Heart right ventricle (tissue), 16 donors: ENCODE measurements at regions of chr15 and their contacts with region 1.

Region 1: GRCh38 chr15:67188551-67189218 is 65.8 kb downstream of the AAGAB start:
- DNase-seq: peak in 1 of 2 donors; percentile 75
- ATAC-seq: peak in 5 of 8 donors; percentile 15 to 37 (median 24)
- H3K4me3 ChIP-seq: no peak overlapping the region
- H3K27ac ChIP-seq: peak overlapping the region; percentile 79 to 95 (median 88)
- H3K4me1 ChIP-seq: peaks cover 35 to 70% (median 66%) of the 10 kb centered on the region in 9 donors
- H3K27me3 ChIP-seq: no peaks in the 10 kb centered on the region
- CTCF ChIP-seq: no peak

Region 2: GRCh38 chr15:66883322-66883911 is 305.3 kb before region 1 on chr15:
- intact Hi-C with region 1: loop called in 1 of 10 experiments (anchors 5 kb)
- DNase-seq: peak; percentile 86 to 94
- ATAC-seq: peak; percentile 77 to 89 (median 85)
- H3K4me3 ChIP-seq: no peak overlapping the region
- H3K27ac ChIP-seq: peak overlapping the region; percentile 36 to 90 (median 74)
- H3K4me1 ChIP-seq: peaks cover 16 to 68% (median 59%) of the 10 kb centered on the region in 9 donors
- H3K27me3 ChIP-seq: no peaks in the 10 kb centered on the region
- CTCF ChIP-seq: no peak

Region 3: GRCh38 chr15:66946578-66947164 is 242.0 kb before region 1 on chr15:
- intact Hi-C with region 1: loop called in 2 of 10 experiments (anchors 10 kb)
- DNase-seq: peak; percentile 60 to 63
- ATAC-seq: peak; percentile 45 to 79 (median 68)
- H3K4me3 ChIP-seq: peak overlapping the region in 1 of 10 donors; percentile 6
- H3K27ac ChIP-seq: no peak overlapping the region
- H3K4me1 ChIP-seq: peaks cover 0 to 9% (median 0%) of the 10 kb centered on the region in 9 donors
- H3K27me3 ChIP-seq: no peaks in the 10 kb centered on the region
- CTCF ChIP-seq: peak; percentile 84 to 98 (median 92)

Region 4: DNA sequence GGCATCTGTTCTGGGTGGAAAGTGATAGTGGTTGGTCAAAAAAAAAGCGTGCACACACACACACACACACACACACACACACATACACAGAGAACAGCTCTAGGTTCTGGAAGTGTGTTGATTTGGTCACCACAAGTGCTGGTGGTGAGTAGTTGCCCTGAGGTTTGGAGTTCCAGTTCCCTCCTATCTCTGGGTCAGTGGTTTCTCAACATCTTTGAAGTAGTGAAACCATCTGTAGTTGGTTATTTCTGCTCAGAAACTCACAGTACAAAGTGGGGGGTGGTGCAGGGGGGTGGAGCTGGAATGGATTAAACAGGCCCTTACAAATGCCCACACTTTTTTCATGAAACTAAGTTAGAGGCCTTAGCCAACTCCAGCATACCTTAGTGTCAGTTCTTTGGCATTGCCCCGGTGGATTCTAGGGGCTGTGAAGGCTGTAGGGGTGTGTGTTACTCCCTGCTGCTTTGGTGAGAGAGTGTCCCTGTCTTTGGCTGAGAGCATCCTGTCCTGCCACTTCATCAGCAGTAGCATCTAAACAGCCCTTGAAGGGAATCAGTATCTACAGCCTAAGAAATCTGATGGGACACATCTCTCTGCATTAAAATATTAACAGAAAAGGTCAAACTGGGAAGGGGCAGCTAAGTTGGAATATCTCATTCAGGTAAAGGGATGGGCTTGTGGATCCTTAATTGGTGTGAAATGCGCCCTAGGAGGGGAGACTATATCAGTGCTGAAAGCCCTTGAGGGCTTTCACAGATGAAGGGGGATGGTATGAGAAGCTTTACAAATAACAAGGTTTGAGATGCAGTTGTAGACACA is 102.7 kb before region 1 on chr15:
- intact Hi-C with region 1: loop called in 1 of 10 experiments (anchors 1 kb)
- DNase-seq: no peak
- ATAC-seq: peak in 4 of 8 donors; percentile 20 to 32 (median 22)
- H3K4me3 ChIP-seq: no peak overlapping the region
- H3K27ac ChIP-seq: peak overlapping the region in 1 of 10 donors; percentile 23
- H3K4me1 ChIP-seq: peaks cover 39 to 100% (median 91%) of the 10 kb centered on the region in 9 donors
- H3K27me3 ChIP-seq: no peaks in the 10 kb centered on the region
- CTCF ChIP-seq: no peak

Region 5: GRCh38 chr15:67109141-67110034 is 79.3 kb before region 1 on chr15:
- intact Hi-C with region 1: loop called in 1 of 10 experiments (anchors 10 kb)
- DNase-seq: peak; percentile 57 to 72
- ATAC-seq: peak; percentile 24 to 79 (median 52)
- H3K4me3 ChIP-seq: no peak overlapping the region
- H3K27ac ChIP-seq: peak overlapping the region in 8 of 10 donors; percentile 9 to 57 (median 32)
- H3K4me1 ChIP-seq: peaks cover 25 to 87% (median 59%) of the 10 kb centered on the region in 9 donors
- H3K27me3 ChIP-seq: no peaks in the 10 kb centered on the region
- CTCF ChIP-seq: no peak

Region 6: GRCh38 chr15:67120839-67121643 is 67.6 kb before region 1 on chr15:
- intact Hi-C with region 1: loop called in 1 of 10 experiments (anchors 5 kb)
- DNase-seq: peak; percentile 88 to 89
- ATAC-seq: peak; percentile 84 to 93 (median 88)
- H3K4me3 ChIP-seq: peak overlapping the region in 6 of 10 donors; percentile 2 to 31 (median 20)
- H3K27ac ChIP-seq: peak overlapping the region; percentile 59 to 92 (median 88)
- H3K4me1 ChIP-seq: peaks cover 28 to 98% (median 80%) of the 10 kb centered on the region in 9 donors
- H3K27me3 ChIP-seq: no peaks in the 10 kb centered on the region
- CTCF ChIP-seq: peak in 1 of 9 donors; percentile 5